ENCODE measurements at regions of chr2 and their contacts with region 1.

Region 1: DNA sequence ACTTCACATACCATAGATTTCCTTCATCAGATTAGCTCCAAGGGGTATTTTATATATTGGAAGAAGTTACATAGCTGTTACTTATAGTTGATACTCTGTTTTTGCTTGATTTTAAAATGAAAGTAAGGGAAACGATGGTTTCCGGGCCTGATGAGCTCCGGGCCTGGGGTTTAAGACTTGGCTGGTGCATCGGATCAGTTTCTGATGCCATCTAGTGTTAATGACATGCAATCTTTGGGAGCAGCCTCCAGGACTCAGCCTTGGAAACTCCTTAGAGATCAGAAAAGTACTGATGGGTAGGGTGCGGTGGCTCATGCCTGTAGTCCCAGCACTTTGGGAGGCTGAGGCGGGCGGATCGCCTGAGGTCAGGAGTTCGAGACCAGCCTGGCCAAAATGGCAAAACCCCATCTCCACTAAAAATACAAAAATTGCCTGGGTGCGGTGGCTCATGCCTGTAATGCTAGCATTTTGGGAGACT is 47.1 kb upstream of the CNOT11 start:
- DNase-seq: peak; percentile 60 to 69
- H3K4me3 ChIP-seq: no peak overlapping the region
- H3K27ac ChIP-seq: no peak overlapping the region
- H3K4me1 ChIP-seq: no peaks in the 10 kb centered on the region
- H3K27me3 ChIP-seq: no peaks in the 10 kb centered on the region
- CTCF ChIP-seq: peak in 4 of 6 experiments; percentile 34 to 63 (median 60)
- POLR2A ChIP-seq: no peak

Region 2: DNA sequence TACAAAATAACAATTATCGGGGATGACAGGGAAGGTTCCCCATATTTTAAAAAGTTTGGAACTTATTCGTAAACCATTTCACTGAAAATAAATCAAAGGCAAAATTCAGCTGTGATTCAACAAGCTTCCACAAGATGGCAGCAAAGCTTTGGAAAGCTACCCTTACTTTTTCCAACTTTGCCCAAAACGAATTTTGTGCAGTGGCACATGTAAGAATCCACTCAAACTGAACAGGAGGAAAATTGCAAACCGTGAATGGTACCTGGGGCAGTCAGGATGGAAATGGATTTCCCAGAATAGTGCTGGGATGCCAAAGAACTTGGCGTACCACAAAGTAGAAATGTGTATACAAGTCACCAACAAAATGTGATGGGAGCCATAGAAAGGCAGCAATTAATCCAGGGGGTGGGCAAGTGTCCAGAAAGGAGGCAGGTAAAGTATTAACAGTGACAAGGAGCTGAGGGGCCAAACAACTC is 192.8 kb before region 1 on chr2:
- intact Hi-C with region 1: loop called (anchors 5 kb)
- DNase-seq: peak; percentile 20 to 26
- H3K4me3 ChIP-seq: no peak overlapping the region
- H3K27ac ChIP-seq: no peak overlapping the region
- H3K4me1 ChIP-seq: no peaks in the 10 kb centered on the region
- H3K27me3 ChIP-seq: no peaks in the 10 kb centered on the region
- CTCF ChIP-seq: peak; percentile 56 to 92 (median 77)
- POLR2A ChIP-seq: no peak